Caco-2 (cell line): ENCODE measurements at regions of chr4 and their contacts with region 1.

Region 1: DNA sequence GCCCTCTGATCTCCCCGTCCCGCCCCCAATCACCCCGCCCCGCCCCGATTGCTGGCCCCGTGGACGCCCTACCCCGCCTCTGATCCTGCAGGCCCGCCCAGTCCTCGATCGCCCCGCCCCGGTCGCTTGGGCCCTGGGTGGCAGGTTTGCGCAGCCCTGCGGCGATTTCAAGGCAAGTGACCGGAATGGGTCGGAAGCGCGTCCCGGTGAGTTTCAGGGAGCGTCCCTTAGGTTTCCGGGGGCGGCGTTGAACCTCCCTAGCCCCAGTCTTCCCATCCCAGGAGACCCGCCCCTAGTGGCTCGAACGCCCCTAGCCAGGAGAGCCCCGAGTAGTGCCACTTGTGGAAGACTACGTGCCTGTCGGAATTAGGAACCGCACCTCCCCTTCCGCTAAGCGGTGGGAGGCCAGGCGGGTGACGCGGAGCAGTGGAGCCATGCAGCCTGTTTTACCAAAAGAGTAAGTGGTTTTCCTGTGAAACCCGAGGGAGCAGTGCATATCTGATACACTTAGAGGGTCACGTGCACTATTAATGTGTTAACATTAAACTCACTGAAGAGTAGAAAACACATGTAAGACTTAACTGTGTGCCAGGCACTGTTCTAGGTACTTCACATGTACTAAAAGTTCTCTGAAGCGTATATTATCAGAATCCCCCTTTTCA is 354 bp upstream of the TEC start:
- DNase-seq: peak; percentile 94
- H3K4me3 ChIP-seq: peak overlapping the region; percentile 89
- H3K4me3 Mint-ChIP-seq: peak overlapping the region; percentile 91
- H3K27ac Mint-ChIP-seq: peak overlapping the region; percentile 72
- H3K4me1 ChIP-seq: 0 out of 2 replicates have a peak, but pooled peaks cover 7% of the 10 kb centered on the region
- H3K4me1 Mint-ChIP-seq: no peaks in the 10 kb centered on the region
- H3K27me3 ChIP-seq: no peaks in the 10 kb centered on the region
- H3K27me3 Mint-ChIP-seq: no peaks in the 10 kb centered on the region
- CTCF ChIP-seq: peak in 1 of 2 experiments; percentile 25

Region 2: GRCh38 chr4:48290146-48290772 is 20.3 kb after region 1 on chr4:
- CTCF ChIA-PET with region 1: interaction called, 5 read pairs
- POLR2A ChIA-PET with region 1: no interaction called
- intact Hi-C with region 1: loop called (anchors 1 kb)
- DNase-seq: peak in 1 of 2 experiments; percentile 46
- H3K4me3 ChIP-seq: no peak overlapping the region
- H3K4me3 Mint-ChIP-seq: no peak overlapping the region
- H3K27ac Mint-ChIP-seq: no peak overlapping the region
- H3K4me1 ChIP-seq: no peaks in the 10 kb centered on the region
- H3K4me1 Mint-ChIP-seq: peaks cover 2% of the 10 kb centered on the region
- H3K27me3 ChIP-seq: no peaks in the 10 kb centered on the region
- H3K27me3 Mint-ChIP-seq: no peaks in the 10 kb centered on the region
- CTCF ChIP-seq: peak; percentile 39 to 60